Activated naive CD4-positive, alpha-beta T cell treated with anti-CD3 and anti-CD28 coated beads for 36 hours (primary cell): ENCODE measurements at regions of chr10 and their contacts with region 1.

Region 1: GRCh38 chr10:97412891-97413304 is 11.8 kb upstream of the RRP12 start:
- DNase-seq: peak; percentile 88
- H3K4me3 Mint-ChIP-seq: peak overlapping the region; percentile 49
- H3K27ac Mint-ChIP-seq: peak overlapping the region; percentile 87
- H3K4me1 Mint-ChIP-seq: peaks cover 52% of the 10 kb centered on the region
- H3K27me3 Mint-ChIP-seq: no peaks in the 10 kb centered on the region

Region 2: DNA sequence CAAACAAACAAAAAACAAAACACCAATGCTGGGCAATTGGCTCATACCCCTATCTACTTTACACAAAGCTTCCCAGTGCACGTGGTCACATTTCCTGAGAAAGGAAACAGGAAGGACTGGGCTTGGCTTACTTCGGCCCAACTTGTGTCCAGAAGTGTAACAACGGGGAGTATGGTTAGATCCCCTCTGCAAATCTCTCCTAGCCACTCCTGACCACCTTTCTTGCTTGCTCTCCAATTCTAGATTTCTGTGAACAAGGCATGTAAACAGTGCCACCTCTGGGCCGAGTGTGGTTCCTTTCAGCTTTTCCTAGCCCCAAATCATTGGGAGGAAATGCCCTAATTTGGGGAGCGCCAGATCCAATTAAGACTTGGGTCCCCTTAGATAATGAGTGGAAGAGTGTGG is 57.3 kb before region 1 on chr10:
- CTCF ChIA-PET with region 1: no interaction called
- intact Hi-C with region 1: no loop called
- DNase-seq: peak; percentile 20
- H3K4me3 Mint-ChIP-seq: no peak overlapping the region
- H3K27ac Mint-ChIP-seq: no peak overlapping the region
- H3K4me1 Mint-ChIP-seq: no peaks in the 10 kb centered on the region
- H3K27me3 Mint-ChIP-seq: no peaks in the 10 kb centered on the region

Region 3: GRCh38 chr10:97400665-97401454 is 12.0 kb before region 1 on chr10 and contains the start of gene RRP12:
- CTCF ChIA-PET with region 1: interaction called, 29 read pairs
- intact Hi-C with region 1: loop called (anchors 1 kb)
- DNase-seq: peak; percentile 92
- H3K4me3 Mint-ChIP-seq: peak within 1 kb of the TSS; percentile 92
- H3K27ac Mint-ChIP-seq: peak within 1 kb of the TSS; percentile 83
- H3K4me1 Mint-ChIP-seq: peaks cover 15% of the 10 kb centered on the region
- H3K27me3 Mint-ChIP-seq: no peaks in the 10 kb centered on the region
- total RNA-seq, gene RRP12: 51.0 to 55.2 TPM

Region 4: GRCh38 chr10:97425964-97426775 is 13.3 kb after region 1 on chr10 and contains the start of gene PGAM1:
- CTCF ChIA-PET with region 1: interaction called, 90 read pairs
- intact Hi-C with region 1: loop called (anchors 1 kb)
- DNase-seq: peak; percentile 95
- H3K4me3 Mint-ChIP-seq: peak within 1 kb of the TSS; percentile 90
- H3K27ac Mint-ChIP-seq: peak within 1 kb of the TSS; percentile 98
- H3K4me1 Mint-ChIP-seq: peaks cover 50% of the 10 kb centered on the region
- H3K27me3 Mint-ChIP-seq: no peaks in the 10 kb centered on the region
- total RNA-seq, gene PGAM1: 1,371 to 1,393 TPM

Region 5: DNA sequence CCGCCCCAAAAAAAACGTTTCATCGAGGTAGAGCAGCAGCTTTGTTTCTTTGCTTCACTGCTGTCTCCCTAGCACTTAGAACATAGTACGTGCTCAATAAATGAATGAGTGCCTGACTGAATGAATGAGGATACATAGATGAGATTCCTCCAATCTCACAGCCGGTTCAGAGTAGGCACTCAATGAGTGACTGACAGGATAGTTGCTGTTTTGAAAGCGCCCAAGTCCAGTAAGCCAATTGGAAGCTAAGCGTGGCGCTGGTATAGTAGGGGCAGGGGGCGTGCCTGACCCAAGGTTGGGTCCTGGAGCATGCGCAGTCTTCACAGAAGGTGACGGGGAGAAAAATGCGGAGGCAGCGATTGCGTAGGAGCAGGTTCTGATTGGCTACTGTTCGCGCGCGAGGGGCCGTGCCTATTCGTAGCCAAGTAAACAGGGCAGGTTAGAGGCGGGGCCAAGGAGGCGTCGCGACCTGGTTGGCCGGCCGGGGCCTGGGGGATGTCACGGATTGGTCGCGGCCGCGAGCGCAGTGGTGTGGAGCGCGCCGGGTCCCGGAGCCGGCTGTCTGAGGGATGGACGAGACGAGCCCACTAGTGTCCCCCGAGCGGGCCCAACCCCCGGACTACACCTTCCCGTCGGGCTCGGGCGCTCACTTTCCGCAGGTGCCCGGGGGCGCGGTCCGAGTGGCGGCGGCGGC is 227.4 kb after region 1 on chr10 and contains the start of gene PI4K2A:
- CTCF ChIA-PET with region 1: interaction called, 3 read pairs
- intact Hi-C with region 1: loop called (anchors 2 kb)
- DNase-seq: peak; percentile 100
- H3K4me3 Mint-ChIP-seq: peak within 1 kb of the TSS; percentile 93
- H3K27ac Mint-ChIP-seq: peak within 1 kb of the TSS; percentile 73
- H3K4me1 Mint-ChIP-seq: peaks cover 18% of the 10 kb centered on the region
- H3K27me3 Mint-ChIP-seq: no peaks in the 10 kb centered on the region
- total RNA-seq, gene PI4K2A: 8.9 to 9.4 TPM